ENCODE measurements at regions of chr2 and their contacts with region 1.

Region 1: GRCh38 chr2:61176755-61177726 is 15.1 kb downstream of the C2orf74 start:
- DNase-seq: peak in 1 of 2 donors; percentile 95
- H3K4me3 ChIP-seq: peak overlapping the region; percentile 76 to 98
- H3K27ac ChIP-seq: peak overlapping the region; percentile 100
- H3K4me1 ChIP-seq: peaks cover 42% of the 10 kb centered on the region
- H3K27me3 ChIP-seq: no peaks in the 10 kb centered on the region
- CTCF ChIP-seq: no peak
- POLR2A ChIP-seq: peak in 1 of 2 donors; percentile 79

Region 2: GRCh38 chr2:60881047-60881932 is 295.8 kb before region 1 on chr2 and contains the start of gene REL:
- intact Hi-C with region 1: loop called (anchors 10 kb)
- DNase-seq: peak in 1 of 2 donors; percentile 95
- H3K4me3 ChIP-seq: peak within 1 kb of the TSS; percentile 83 to 94
- H3K27ac ChIP-seq: peak within 1 kb of the TSS; percentile 91
- H3K4me1 ChIP-seq: peaks cover 30% of the 10 kb centered on the region
- H3K27me3 ChIP-seq: no peaks in the 10 kb centered on the region
- CTCF ChIP-seq: no peak
- POLR2A ChIP-seq: peak; percentile 56 to 92
- total RNA-seq, gene REL: 29.0 TPM

Measured in vagina (tissue), 2 donors.